Activated B cell treated with CpG ODN at 0.5 μM for 24 hours (primary cell): ENCODE measurements at regions of chr1 and their contacts with region 1.

Region 1: DNA sequence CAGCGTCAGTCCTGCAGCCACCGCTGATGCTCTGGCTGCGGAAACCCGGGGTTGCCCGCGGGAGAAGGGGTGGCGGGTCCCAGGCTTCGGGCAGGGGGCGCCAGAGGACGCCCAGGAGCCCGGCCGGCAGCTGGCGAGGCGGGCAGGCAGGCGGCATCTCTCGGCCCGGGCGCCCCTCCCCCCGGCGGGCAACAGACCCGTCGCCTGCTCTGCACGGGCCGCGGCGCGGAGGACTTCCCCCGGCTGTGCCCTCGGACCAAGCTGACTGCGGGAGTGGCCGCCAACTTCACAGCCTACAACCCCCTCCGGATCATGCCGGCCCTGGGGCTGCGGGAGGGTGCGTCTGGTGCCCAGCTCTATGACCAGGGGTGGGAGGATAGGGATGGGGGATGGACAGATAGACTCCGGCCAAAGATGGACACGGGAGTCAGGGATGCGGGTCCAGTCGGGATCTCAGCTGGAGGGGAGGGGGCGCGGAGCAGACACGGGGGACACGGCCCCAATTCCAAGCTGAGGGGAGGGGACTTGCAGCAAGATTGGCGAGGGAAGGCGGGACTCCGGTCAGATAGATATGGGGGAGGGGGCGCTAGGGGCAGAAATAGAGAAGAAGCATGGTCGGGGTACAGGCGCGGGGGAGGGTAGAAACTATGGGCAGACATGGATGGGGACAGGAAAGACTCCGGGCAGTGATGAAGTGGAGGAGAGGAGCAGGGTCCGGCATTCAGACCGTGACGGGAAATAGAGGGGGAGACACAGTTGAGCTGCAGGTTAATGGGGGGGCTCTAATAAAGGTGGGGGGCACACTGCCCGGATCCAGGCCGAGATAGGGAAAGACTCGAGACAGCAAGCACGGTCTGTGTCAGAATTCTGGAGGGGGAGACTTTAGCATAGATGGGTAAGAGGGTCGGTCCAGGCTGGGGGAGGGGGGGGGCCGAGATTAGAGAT is 1.1 kb downstream of the ADGRB2 start:
- DNase-seq: peak; percentile 79
- ATAC-seq: peak; percentile 51
- H3K4me3 Mint-ChIP-seq: peak overlapping the region; percentile 78
- H3K27ac Mint-ChIP-seq: no peak overlapping the region
- H3K4me1 Mint-ChIP-seq: peaks cover 32% of the 10 kb centered on the region
- H3K27me3 Mint-ChIP-seq: peaks cover 3% of the 10 kb centered on the region
- CTCF ChIP-seq: no peak

Region 2: DNA sequence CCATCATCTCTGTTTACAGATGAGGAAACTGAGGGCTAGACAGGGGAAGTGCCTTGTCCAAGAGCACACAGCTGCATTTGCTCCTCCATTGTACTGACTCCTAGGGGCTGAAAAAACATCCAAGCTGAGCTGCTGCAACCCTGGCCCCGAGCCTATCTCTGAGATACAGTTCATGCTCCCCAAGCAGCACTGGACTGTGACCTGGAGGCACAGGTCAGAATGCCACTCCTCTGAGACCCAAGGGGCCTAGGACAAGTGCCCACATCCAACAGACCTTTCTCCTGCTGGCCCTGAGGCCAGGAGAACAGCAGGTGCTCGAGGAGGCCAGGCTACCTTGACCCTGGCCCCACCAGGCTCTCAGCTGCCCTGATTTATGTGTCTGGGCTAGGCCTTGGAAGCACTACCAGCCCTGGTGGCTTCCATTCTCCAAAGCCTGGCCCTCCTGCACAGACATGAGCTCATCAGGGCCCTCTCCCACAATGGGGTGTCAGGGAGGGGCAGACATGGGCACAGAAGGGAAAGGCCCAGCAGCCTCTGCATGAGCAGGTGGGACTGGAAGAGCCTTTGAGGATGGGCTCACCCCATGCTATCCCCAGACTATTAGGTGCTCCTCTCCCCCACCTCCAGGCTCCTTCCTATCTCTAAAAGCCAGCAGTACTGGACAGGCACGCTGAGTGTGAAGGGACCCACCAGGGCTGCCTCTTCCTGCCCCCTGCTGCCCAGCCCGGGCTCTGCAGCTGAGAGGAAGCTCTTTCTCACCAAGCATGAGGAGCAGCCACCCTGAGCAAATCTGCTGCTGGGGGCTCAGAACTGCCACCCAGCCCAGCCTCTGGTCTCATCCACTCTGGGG is 17.7 kb before region 1 on chr1:
- CTCF ChIA-PET with region 1: interaction called, 3 read pairs
- POLR2A ChIA-PET with region 1: interaction called, 6 read pairs
- intact Hi-C with region 1: loop called (anchors 2 kb)
- DNase-seq: no peak
- ATAC-seq: peak; percentile 64
- H3K4me3 Mint-ChIP-seq: no peak overlapping the region
- H3K27ac Mint-ChIP-seq: no peak overlapping the region
- H3K4me1 Mint-ChIP-seq: peaks cover 37% of the 10 kb centered on the region
- H3K27me3 Mint-ChIP-seq: peaks cover 4% of the 10 kb centered on the region
- CTCF ChIP-seq: no peak

Region 3: GRCh38 chr1:31778763-31779488 is 15.9 kb after region 1 on chr1:
- CTCF ChIA-PET with region 1: interaction called, 14 read pairs
- POLR2A ChIA-PET with region 1: interaction called, 27 read pairs
- intact Hi-C with region 1: no loop called
- DNase-seq: no peak
- ATAC-seq: no peak
- H3K4me3 Mint-ChIP-seq: no peak overlapping the region
- H3K27ac Mint-ChIP-seq: no peak overlapping the region
- H3K4me1 Mint-ChIP-seq: no peaks in the 10 kb centered on the region
- H3K27me3 Mint-ChIP-seq: peaks cover 33% of the 10 kb centered on the region
- CTCF ChIP-seq: no peak

Region 4: DNA sequence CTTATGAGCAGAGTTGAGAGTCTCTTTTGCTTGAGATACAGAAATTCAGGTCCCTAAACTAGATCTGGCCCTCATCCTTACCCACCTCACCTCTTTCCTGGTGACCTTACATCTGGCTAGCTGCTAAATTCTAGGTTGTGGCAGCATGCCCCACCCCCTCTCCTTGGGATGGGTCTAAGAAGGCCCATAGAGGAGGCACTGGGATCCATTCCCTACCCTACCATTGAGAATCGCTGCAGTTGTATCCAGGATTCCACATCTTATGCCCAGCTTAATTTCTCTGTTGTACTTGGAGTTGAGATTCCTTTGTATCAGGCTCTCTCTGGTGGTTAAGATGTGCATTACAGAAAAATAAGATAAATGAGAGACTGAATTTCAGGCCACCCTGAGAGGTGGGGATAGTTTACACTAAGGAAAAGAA is 300.3 kb after region 1 on chr1:
- CTCF ChIA-PET with region 1: interaction called, 5 read pairs
- POLR2A ChIA-PET with region 1: no interaction called
- intact Hi-C with region 1: loop called (anchors 2 kb)
- DNase-seq: no peak
- ATAC-seq: peak; percentile 75
- H3K4me3 Mint-ChIP-seq: no peak overlapping the region
- H3K27ac Mint-ChIP-seq: no peak overlapping the region
- H3K4me1 Mint-ChIP-seq: peaks cover 9% of the 10 kb centered on the region
- H3K27me3 Mint-ChIP-seq: no peaks in the 10 kb centered on the region
- CTCF ChIP-seq: no peak

Region 5: DNA sequence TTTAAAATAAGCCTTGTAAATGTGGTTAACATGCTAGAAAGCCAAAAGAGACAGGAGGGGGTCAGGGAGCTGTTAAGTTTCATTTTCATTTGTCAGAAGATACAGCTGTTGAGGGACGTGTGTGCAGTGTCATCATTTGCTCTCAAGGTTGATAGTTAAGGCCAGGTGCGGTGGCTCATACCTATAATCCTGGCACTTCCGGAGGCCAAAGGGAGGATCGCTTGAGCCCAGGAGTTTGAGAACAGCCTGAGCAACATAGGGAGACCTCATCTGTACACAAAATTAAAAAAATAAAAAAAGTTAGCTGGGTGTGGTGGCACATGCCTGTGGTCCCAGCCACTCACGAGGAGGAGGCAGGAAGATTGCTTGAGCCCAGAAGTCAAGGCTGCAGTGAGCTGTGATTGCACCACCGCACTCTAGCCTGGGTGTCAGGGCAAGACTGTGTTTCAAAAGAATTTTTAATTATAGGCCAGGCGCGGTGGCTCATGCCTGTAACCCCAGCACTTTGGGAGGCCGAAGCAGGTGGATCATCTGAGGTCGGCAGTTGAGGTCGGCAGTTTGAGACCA is 864.7 kb after region 1 on chr1:
- CTCF ChIA-PET with region 1: no interaction called
- POLR2A ChIA-PET with region 1: no interaction called
- intact Hi-C with region 1: no loop called
- DNase-seq: no peak
- ATAC-seq: peak; percentile 56
- H3K4me3 Mint-ChIP-seq: no peak overlapping the region
- H3K27ac Mint-ChIP-seq: peak overlapping the region; percentile 70
- H3K4me1 Mint-ChIP-seq: peaks cover 25% of the 10 kb centered on the region
- H3K27me3 Mint-ChIP-seq: no peaks in the 10 kb centered on the region
- CTCF ChIP-seq: no peak